K562 (cell line): ENCODE measurements at regions of chr4 and their contacts with region 1.

Region 1: GRCh38 chr4:159206427-159206871 is 103.6 kb downstream of the RAPGEF2 start:
- DNase-seq: no peak
- ATAC-seq: no peak
- H3K4me3 ChIP-seq: no peak overlapping the region
- H3K27ac ChIP-seq: no peak overlapping the region
- H3K4me1 ChIP-seq: no peaks in the 10 kb centered on the region; a peak in 1 of 5 replicates
- H3K27me3 ChIP-seq: no peaks in the 10 kb centered on the region
- CTCF ChIP-seq: no peak
- EP300 ChIP-seq: no peak
- POLR2A ChIP-seq: no peak
- RAD21 ChIP-seq: no peak

Region 2: DNA sequence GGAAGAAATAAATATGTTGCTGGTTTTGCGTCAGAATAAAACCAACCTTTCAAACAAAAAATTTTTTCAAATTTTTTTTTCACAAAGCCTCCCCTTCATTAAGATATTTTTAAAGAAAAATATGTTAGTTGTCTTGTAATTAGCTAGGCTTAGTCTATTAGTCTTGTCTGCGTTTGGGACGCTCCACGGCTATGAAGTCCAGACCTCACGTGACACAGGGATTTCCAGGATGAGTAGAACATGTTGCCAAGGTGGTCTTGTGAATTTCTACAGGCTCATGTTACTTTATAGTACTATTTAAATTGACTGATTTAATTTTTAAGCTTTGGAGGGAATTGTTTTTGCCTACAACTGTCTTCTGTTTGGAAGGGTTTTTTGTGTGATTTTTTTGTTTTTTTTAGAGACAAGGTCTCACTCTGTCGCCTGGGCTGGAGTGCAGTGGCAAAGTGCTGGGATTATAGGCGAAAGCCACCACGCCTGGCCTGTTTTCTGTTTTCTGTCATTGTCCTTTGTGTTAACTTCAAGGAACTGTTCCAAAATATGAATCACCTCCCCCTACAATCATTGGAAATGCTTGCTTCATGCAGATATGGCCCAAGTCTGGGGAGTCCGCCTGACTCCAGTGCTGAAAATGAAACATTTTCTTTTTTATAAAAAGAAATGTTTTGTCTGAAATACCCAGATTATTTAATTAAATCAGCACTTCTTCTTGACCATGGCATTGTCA is 970.0 kb before region 1 on chr4:
- CTCF ChIA-PET with region 1: no interaction called
- POLR2A ChIA-PET with region 1: no interaction called
- in situ Hi-C with region 1: loop called (anchors 25 kb)
- intact Hi-C with region 1: no loop called
- DNase-seq: no peak
- ATAC-seq: no peak
- H3K4me3 ChIP-seq: no peak overlapping the region
- H3K27ac ChIP-seq: no peak overlapping the region
- H3K4me1 ChIP-seq: no peaks in the 10 kb centered on the region
- H3K27me3 ChIP-seq: no peaks in the 10 kb centered on the region
- CTCF ChIP-seq: no peak
- EP300 ChIP-seq: no peak
- POLR2A ChIP-seq: no peak
- RAD21 ChIP-seq: no peak